ENCODE measurements at regions of chr5 and their contacts with region 1.

Region 1: DNA sequence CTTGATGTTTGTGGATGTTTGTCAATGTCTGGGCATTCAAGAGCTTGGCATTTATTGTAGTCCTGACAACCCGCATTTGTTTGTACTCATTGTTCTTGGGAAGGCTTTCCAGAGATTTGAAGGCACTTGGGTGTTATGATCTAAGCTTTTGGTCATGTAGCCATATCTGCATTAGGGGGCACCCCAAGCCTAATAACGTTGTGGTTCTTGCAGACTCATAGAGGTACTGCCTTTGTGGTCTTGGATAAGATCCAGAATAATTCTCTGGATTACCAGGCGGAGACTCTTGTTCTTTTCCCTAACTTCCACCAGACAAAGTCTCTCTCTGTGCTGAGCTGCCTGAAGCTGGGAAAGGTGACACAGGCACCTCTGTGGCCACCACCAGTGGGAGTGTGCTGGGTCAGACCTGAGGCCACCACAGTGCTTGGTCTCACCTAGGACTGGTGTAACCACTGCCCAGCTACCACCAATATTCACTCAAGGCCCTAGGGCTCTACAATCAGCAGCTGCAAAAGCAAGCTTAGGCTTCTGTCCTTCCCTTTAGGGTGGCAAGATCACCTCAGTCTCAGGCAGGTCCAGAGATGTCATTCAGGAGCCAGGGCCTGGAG is 144.4 kb upstream of the TAS2R1 start:
- DNase-seq: peak in 1 of 2 experiments; percentile 47
- H3K4me3 ChIP-seq: no peak overlapping the region
- H3K4me3 Mint-ChIP-seq: no peak overlapping the region
- H3K27ac Mint-ChIP-seq: no peak overlapping the region
- H3K4me1 ChIP-seq: no peaks in the 10 kb centered on the region
- H3K4me1 Mint-ChIP-seq: no peaks in the 10 kb centered on the region
- H3K27me3 ChIP-seq: no peaks in the 10 kb centered on the region
- H3K27me3 Mint-ChIP-seq: no peaks in the 10 kb centered on the region
- CTCF ChIP-seq: peak in 1 of 2 experiments; percentile 31

Region 2: GRCh38 chr5:9716838-9717281 is 57.7 kb before region 1 on chr5:
- CTCF ChIA-PET with region 1: no interaction called
- POLR2A ChIA-PET with region 1: no interaction called
- intact Hi-C with region 1: no loop called
- DNase-seq: no peak
- H3K4me3 ChIP-seq: no peak overlapping the region
- H3K4me3 Mint-ChIP-seq: no peak overlapping the region
- H3K27ac Mint-ChIP-seq: no peak overlapping the region
- H3K4me1 ChIP-seq: peaks cover 15% of the 10 kb centered on the region; the same call in 1 of the 2 replicates
- H3K4me1 Mint-ChIP-seq: peaks cover 34% of the 10 kb centered on the region
- H3K27me3 ChIP-seq: no peaks in the 10 kb centered on the region
- H3K27me3 Mint-ChIP-seq: no peaks in the 10 kb centered on the region
- CTCF ChIP-seq: no peak

Region 3: GRCh38 chr5:10030210-10030831 is 255.7 kb after region 1 on chr5:
- CTCF ChIA-PET with region 1: no interaction called
- POLR2A ChIA-PET with region 1: no interaction called
- intact Hi-C with region 1: loop called (anchors 2 kb)
- DNase-seq: peak in 1 of 2 experiments; percentile 35
- H3K4me3 ChIP-seq: no peak overlapping the region
- H3K4me3 Mint-ChIP-seq: no peak overlapping the region
- H3K27ac Mint-ChIP-seq: no peak overlapping the region
- H3K4me1 ChIP-seq: no peaks in the 10 kb centered on the region
- H3K4me1 Mint-ChIP-seq: no peaks in the 10 kb centered on the region
- H3K27me3 ChIP-seq: no peaks in the 10 kb centered on the region
- H3K27me3 Mint-ChIP-seq: peaks cover 2% of the 10 kb centered on the region
- CTCF ChIP-seq: no peak

Region 4: GRCh38 chr5:10091701-10092100 is 317.1 kb after region 1 on chr5:
- CTCF ChIA-PET with region 1: no interaction called
- POLR2A ChIA-PET with region 1: no interaction called
- intact Hi-C with region 1: loop called (anchors 1 kb)
- DNase-seq: no peak
- H3K4me3 ChIP-seq: no peak overlapping the region
- H3K4me3 Mint-ChIP-seq: no peak overlapping the region
- H3K27ac Mint-ChIP-seq: no peak overlapping the region
- H3K4me1 ChIP-seq: peaks cover 2% of the 10 kb centered on the region; the same call in 1 of the 2 replicates
- H3K4me1 Mint-ChIP-seq: peaks cover 7% of the 10 kb centered on the region
- H3K27me3 ChIP-seq: no peaks in the 10 kb centered on the region
- H3K27me3 Mint-ChIP-seq: no peaks in the 10 kb centered on the region
- CTCF ChIP-seq: no peak

Region 5: GRCh38 chr5:10133830-10134229 is 359.3 kb after region 1 on chr5:
- CTCF ChIA-PET with region 1: no interaction called
- POLR2A ChIA-PET with region 1: no interaction called
- intact Hi-C with region 1: loop called (anchors 5 kb)
- DNase-seq: no peak
- H3K4me3 ChIP-seq: no peak overlapping the region
- H3K4me3 Mint-ChIP-seq: no peak overlapping the region
- H3K27ac Mint-ChIP-seq: no peak overlapping the region
- H3K4me1 ChIP-seq: no peaks in the 10 kb centered on the region
- H3K4me1 Mint-ChIP-seq: peaks cover 12% of the 10 kb centered on the region
- H3K27me3 ChIP-seq: no peaks in the 10 kb centered on the region
- H3K27me3 Mint-ChIP-seq: no peaks in the 10 kb centered on the region
- CTCF ChIP-seq: peak; percentile 6 to 16